ENCODE measurements at regions of chr12 and their contacts with region 1.

Region 1: DNA sequence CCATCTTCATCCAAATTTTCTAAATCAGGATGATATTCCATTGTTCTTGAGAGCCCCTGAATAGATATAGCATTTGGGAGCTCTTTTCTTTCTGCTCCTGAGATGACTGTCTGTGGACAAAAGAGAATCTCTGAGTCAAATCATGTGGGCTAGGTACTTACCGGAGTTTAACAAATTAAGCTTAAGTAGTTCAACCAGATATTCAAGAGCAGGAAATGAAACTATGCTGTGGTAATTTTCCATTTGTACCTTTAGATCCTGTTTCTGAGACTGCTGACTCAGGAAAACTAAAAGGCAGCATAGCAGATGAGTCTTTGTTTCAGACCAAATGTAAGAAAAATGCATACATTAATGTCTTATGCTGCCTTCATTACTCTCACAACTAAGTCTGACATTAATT is at the start of gene CLEC7A:
- ATAC-seq: no peak
- H3K4me3 ChIP-seq: no peak within 1 kb of the TSS
- H3K27ac ChIP-seq: no peak within 1 kb of the TSS
- H3K4me1 ChIP-seq: peaks cover 0 to 5% of the 10 kb centered on the region in 2 donors
- total RNA-seq, gene CLEC7A: 0.14 to 1.3 (median 0.63) TPM in 5 of 8 experiments, not detected in the others

Region 2: DNA sequence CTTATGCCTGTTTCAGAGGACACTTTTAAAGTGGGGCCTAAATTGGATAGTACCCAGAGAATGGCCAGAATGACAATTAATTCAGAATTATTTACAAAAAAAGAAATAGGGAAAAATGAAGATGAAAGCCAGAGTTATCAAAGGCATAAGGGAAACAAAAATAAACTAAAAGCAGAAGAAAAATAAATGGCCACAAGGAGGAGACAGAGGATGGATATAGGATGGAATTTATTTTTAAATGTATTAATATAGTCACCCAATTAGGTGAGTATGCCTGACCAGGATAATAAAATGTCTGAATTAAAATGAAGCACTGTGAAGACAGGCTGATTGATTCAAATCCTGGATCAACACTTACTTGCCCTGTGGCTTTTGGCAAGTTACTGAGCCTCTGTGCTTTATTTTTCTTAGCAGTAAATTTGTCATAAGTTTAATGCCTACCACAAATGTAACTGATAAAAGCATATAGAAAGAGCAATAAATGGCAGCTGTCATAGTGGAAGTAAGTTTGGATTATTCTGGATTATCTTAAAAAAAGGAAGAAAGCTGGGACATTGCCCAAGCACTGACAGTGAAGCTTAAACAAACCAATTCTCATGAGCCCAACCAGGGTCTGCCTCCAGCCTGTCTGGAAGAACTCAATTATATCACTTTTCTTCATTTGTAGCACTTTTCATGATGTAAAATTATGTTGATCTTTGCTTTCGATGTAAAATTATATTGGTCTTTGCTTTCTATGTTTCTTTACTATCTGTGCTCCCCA is 96.1 kb before region 1 on chr12:
- in situ Hi-C with region 1: loop called in 3 of 9 experiments (anchors 5 to 25 kb)
- ATAC-seq: peak in 2 of 8 experiments; percentile 36 to 38
- H3K4me3 ChIP-seq: no peak overlapping the region
- H3K27ac ChIP-seq: no peak overlapping the region
- H3K4me1 ChIP-seq: no peaks in the 10 kb centered on the region

Region 3: DNA sequence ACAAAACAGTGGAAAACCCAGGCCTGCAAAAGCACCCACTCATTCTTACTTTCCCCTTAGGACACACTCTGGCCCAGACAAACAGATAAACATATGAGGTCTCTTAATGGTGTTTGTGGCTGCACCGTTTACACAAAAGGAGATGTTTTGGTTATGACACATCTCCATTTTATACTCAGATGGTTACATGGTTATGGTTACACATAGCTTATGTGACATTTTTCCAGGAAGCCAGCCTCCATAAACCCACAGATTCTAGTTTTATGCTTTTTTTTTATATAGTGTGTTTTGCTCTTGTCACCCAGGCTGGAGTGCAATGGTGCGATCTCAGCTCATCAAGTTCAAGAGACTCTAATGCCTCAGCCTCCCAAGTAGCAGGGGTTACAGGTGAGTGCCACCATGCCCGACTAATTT is 174.1 kb after region 1 on chr12:
- in situ Hi-C with region 1: no loop called
- ATAC-seq: no peak
- H3K4me3 ChIP-seq: no peak overlapping the region
- H3K27ac ChIP-seq: no peak overlapping the region
- H3K4me1 ChIP-seq: no peaks in the 10 kb centered on the region

Measured in motor neuron (in vitro differentiated cells).